Naive thymus-derived CD4-positive, alpha-beta T cell (primary cell): ENCODE measurements at regions of chr3 and their contacts with region 1.

Region 1: GRCh38 chr3:113676261-113676660 is 20.2 kb downstream of the USF3 start:
- DNase-seq: no peak
- ATAC-seq: peak; percentile 69
- H3K4me3 ChIP-seq: no peak overlapping the region
- H3K4me3 Mint-ChIP-seq: no peak overlapping the region
- H3K27ac ChIP-seq: no peak overlapping the region
- H3K27ac Mint-ChIP-seq: peak overlapping the region in 2 of 9 donors; percentile 2 to 51
- H3K4me1 ChIP-seq: no peaks in the 10 kb centered on the region
- H3K4me1 Mint-ChIP-seq: peaks cover 4 to 27% (median 13%) of the 10 kb centered on the region in 7 donors
- H3K27me3 ChIP-seq: no peaks in the 10 kb centered on the region
- H3K27me3 Mint-ChIP-seq: no peaks in the 10 kb centered on the region

Region 2: GRCh38 chr3:113079218-113079961 is 596.9 kb before region 1 on chr3:
- CTCF ChIA-PET with region 1: no interaction called
- POLR2A ChIA-PET with region 1: no interaction called
- intact Hi-C with region 1: no loop called
- DNase-seq: no peak
- ATAC-seq: no peak
- H3K4me3 ChIP-seq: no peak overlapping the region
- H3K4me3 Mint-ChIP-seq: no peak overlapping the region
- H3K27ac ChIP-seq: no peak overlapping the region
- H3K27ac Mint-ChIP-seq: peak overlapping the region in 1 of 9 donors; percentile 33
- H3K4me1 ChIP-seq: no peaks in the 10 kb centered on the region
- H3K4me1 Mint-ChIP-seq: peaks cover 0 to 4% (median 0%) of the 10 kb centered on the region in 7 donors
- H3K27me3 ChIP-seq: no peaks in the 10 kb centered on the region
- H3K27me3 Mint-ChIP-seq: no peaks in the 10 kb centered on the region

Region 3: DNA sequence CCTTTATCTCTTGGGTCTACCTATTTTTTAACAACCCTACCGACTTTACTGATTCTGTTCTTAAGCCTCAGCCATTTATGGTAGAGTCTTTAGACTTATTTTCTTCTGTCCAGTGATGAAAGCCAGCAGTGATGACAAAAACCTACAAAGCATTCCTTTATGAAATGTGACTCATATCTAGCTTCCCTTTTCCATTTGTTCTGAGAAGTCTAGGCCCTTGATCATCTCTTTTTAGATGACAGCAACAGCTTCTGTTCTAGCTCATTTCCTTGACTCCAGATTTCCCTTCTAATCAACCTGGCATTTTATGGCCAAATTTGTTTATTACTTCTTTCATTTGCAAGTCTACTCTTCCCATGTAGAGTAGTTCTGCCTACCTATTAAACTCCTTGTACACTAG is 271.1 kb before region 1 on chr3:
- CTCF ChIA-PET with region 1: no interaction called
- POLR2A ChIA-PET with region 1: no interaction called
- intact Hi-C with region 1: no loop called
- DNase-seq: no peak
- ATAC-seq: no peak
- H3K4me3 ChIP-seq: no peak overlapping the region
- H3K4me3 Mint-ChIP-seq: no peak overlapping the region
- H3K27ac ChIP-seq: no peak overlapping the region
- H3K27ac Mint-ChIP-seq: no peak overlapping the region
- H3K4me1 ChIP-seq: no peaks in the 10 kb centered on the region
- H3K4me1 Mint-ChIP-seq: peaks cover 0 to 2% (median 0%) of the 10 kb centered on the region in 7 donors
- H3K27me3 ChIP-seq: no peaks in the 10 kb centered on the region
- H3K27me3 Mint-ChIP-seq: no peaks in the 10 kb centered on the region

Region 4: DNA sequence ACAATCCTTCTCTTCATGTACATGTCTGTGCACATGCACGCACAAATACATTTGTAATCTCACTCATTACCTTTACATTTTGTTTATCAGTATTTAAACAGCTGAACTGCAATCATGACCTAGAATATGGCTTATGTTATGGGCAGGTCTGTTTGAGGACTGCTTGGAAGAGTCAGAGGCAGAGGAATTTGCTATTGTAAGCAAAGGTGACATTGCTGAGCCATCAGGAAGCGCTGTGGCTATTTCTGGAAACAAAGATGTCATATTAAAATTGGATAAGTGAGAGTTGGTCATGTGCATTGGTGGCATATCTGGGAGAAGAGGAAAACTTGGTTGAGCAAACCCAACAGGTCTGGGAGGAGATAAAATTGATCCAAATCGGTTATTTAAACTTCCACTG is 21.4 kb before region 1 on chr3:
- CTCF ChIA-PET with region 1: no interaction called
- POLR2A ChIA-PET with region 1: interaction called, 11 read pairs
- intact Hi-C with region 1: no loop called
- DNase-seq: no peak
- ATAC-seq: no peak
- H3K4me3 ChIP-seq: no peak overlapping the region
- H3K4me3 Mint-ChIP-seq: no peak overlapping the region
- H3K27ac ChIP-seq: no peak overlapping the region
- H3K27ac Mint-ChIP-seq: peak overlapping the region in 2 of 9 donors; percentile 7 to 16
- H3K4me1 ChIP-seq: no peaks in the 10 kb centered on the region
- H3K4me1 Mint-ChIP-seq: peaks cover 0 to 5% (median 0%) of the 10 kb centered on the region in 7 donors
- H3K27me3 ChIP-seq: no peaks in the 10 kb centered on the region
- H3K27me3 Mint-ChIP-seq: no peaks in the 10 kb centered on the region

Region 5: GRCh38 chr3:113812854-113813253 is 136.6 kb after region 1 on chr3:
- CTCF ChIA-PET with region 1: no interaction called
- POLR2A ChIA-PET with region 1: no interaction called
- intact Hi-C with region 1: no loop called
- DNase-seq: no peak
- ATAC-seq: no peak
- H3K4me3 ChIP-seq: no peak overlapping the region
- H3K4me3 Mint-ChIP-seq: no peak overlapping the region
- H3K27ac ChIP-seq: no peak overlapping the region
- H3K27ac Mint-ChIP-seq: no peak overlapping the region
- H3K4me1 ChIP-seq: no peaks in the 10 kb centered on the region
- H3K4me1 Mint-ChIP-seq: no peaks in the 10 kb centered on the region
- H3K27me3 ChIP-seq: no peaks in the 10 kb centered on the region
- H3K27me3 Mint-ChIP-seq: no peaks in the 10 kb centered on the region